ENCODE measurements at regions of chr3 and their contacts with region 1.

Region 1: GRCh38 chr3:195542698-195543499 is at the start of gene PPP1R2:
- DNase-seq: peak; percentile 65 to 96 (median 93)
- ATAC-seq: peak; percentile 86
- H3K4me3 ChIP-seq: peak within 1 kb of the TSS; percentile 90 to 91
- H3K4me3 Mint-ChIP-seq: peak within 1 kb of the TSS; percentile 93
- H3K27ac ChIP-seq: peak within 1 kb of the TSS; percentile 92 to 98
- H3K27ac Mint-ChIP-seq: peak within 1 kb of the TSS; percentile 97
- H3K4me1 ChIP-seq: peaks cover 67% of the 10 kb centered on the region
- H3K4me1 Mint-ChIP-seq: peaks cover 75% of the 10 kb centered on the region
- H3K27me3 ChIP-seq: no peaks in the 10 kb centered on the region
- H3K27me3 Mint-ChIP-seq: no peaks in the 10 kb centered on the region
- CTCF ChIP-seq: no peak
- total RNA-seq, gene PPP1R2: 160 to 166 TPM

Region 2: GRCh38 chr3:194769020-194769643 is 773.8 kb before region 1 on chr3:
- CTCF ChIA-PET with region 1: no interaction called
- POLR2A ChIA-PET with region 1: no interaction called
- intact Hi-C with region 1: loop called (anchors 5 kb)
- DNase-seq: peak; percentile 82 to 98 (median 89)
- ATAC-seq: peak; percentile 96
- H3K4me3 ChIP-seq: peak overlapping the region; percentile 45 to 51
- H3K4me3 Mint-ChIP-seq: peak overlapping the region; percentile 84
- H3K27ac ChIP-seq: peak overlapping the region; percentile 15 to 71
- H3K27ac Mint-ChIP-seq: peak overlapping the region; percentile 92
- H3K4me1 ChIP-seq: peaks cover 11% of the 10 kb centered on the region
- H3K4me1 Mint-ChIP-seq: peaks cover 26% of the 10 kb centered on the region
- H3K27me3 ChIP-seq: peaks cover 0 to 2% of the 10 kb centered on the region in 2 experiments
- H3K27me3 Mint-ChIP-seq: peaks cover 7% of the 10 kb centered on the region
- CTCF ChIP-seq: no peak

Region 3: GRCh38 chr3:195522254-195523023 is 20.5 kb before region 1 on chr3:
- CTCF ChIA-PET with region 1: interaction called, 33 read pairs
- POLR2A ChIA-PET with region 1: interaction called, 4 read pairs
- intact Hi-C with region 1: loop called (anchors 2 kb)
- DNase-seq: peak in 3 of 9 experiments; percentile 52 to 65 (median 56)
- ATAC-seq: peak; percentile 30
- H3K4me3 ChIP-seq: no peak overlapping the region
- H3K4me3 Mint-ChIP-seq: no peak overlapping the region
- H3K27ac ChIP-seq: no peak overlapping the region
- H3K27ac Mint-ChIP-seq: peak overlapping the region; percentile 75
- H3K4me1 ChIP-seq: peaks cover 35% of the 10 kb centered on the region
- H3K4me1 Mint-ChIP-seq: peaks cover 46% of the 10 kb centered on the region
- H3K27me3 ChIP-seq: no peaks in the 10 kb centered on the region
- H3K27me3 Mint-ChIP-seq: no peaks in the 10 kb centered on the region
- CTCF ChIP-seq: peak; percentile 93

Region 4: DNA sequence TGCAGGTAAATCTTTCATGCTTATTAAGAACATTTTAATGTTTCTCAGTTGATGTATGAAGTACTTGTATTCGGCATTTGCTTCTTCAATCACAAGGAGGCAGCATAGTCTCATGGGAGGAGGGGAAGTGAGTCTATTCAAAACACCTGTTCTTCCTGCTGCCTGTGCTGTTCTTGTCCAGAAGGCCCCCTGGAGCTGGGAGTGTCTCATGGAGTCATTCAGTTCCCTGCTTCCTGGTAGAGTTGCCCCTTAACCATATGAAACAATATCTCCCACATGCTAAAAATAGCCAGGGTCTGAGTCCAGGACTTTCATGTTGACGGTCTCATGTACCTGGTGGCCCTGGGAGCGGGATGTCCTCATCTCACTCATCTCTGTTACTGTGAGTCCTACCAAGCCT is 15.7 kb after region 1 on chr3:
- CTCF ChIA-PET with region 1: interaction called, 20 read pairs
- POLR2A ChIA-PET with region 1: interaction called, 5 read pairs
- intact Hi-C with region 1: loop called in 1 of 2 experiments (anchors 2 kb)
- DNase-seq: peak in 5 of 9 experiments; percentile 29 to 77 (median 34)
- ATAC-seq: peak; percentile 89
- H3K4me3 ChIP-seq: no peak overlapping the region
- H3K4me3 Mint-ChIP-seq: no peak overlapping the region
- H3K27ac ChIP-seq: no peak overlapping the region
- H3K27ac Mint-ChIP-seq: peak overlapping the region; percentile 11
- H3K4me1 ChIP-seq: peaks cover 10% of the 10 kb centered on the region
- H3K4me1 Mint-ChIP-seq: peaks cover 28% of the 10 kb centered on the region
- H3K27me3 ChIP-seq: no peaks in the 10 kb centered on the region
- H3K27me3 Mint-ChIP-seq: no peaks in the 10 kb centered on the region
- CTCF ChIP-seq: peak; percentile 61

Region 5: DNA sequence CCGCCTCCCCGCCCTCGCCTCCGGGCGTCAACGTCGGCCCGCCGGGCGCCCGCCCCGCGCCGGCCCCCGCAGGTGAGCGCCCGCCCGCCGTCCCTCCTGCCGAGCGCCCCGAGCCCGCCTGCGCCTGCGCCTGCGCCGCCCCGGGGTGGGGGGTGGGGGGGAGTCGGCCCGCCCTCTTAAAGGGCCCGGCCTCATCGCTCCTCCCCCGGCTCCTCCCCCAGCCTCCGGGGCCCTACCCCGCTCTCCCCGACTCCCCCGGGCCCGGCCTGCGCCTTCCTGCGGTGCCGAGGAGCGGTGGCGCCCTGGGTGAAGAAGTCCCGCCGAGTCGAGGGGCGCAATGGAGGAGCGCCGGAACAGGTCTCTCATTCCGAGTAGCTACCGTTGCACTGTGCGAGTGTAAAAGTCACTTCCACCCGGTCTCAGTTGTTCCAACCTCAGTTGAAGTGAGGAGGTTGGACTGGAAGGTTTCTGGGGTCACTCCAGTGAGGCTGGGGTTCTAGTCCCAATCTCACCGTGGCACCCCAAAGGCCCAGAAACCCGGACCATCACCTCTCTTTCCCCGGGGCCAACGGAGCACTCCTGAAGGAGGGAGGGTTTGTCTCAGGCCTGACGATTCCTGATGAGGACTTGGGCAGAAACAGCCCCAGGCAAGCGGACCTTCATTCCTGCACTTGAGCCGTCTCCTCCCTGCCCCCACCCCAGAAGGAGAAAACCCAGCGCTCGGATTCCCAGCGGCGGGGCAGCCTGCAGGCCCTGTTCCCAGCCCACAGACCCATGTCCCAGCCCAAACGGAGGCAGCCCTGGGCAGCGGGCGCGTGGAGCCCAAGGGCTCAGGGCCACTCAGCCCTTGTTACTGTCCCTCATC is 367.0 kb after region 1 on chr3:
- CTCF ChIA-PET with region 1: no interaction called
- POLR2A ChIA-PET with region 1: interaction called, 3 read pairs
- intact Hi-C with region 1: loop called (anchors 5 kb)
- DNase-seq: peak; percentile 79 to 95 (median 90)
- ATAC-seq: peak; percentile 61
- H3K4me3 ChIP-seq: peak overlapping the region; percentile 32 to 52
- H3K4me3 Mint-ChIP-seq: peak overlapping the region; percentile 77
- H3K27ac ChIP-seq: peak overlapping the region; percentile 35 to 51
- H3K27ac Mint-ChIP-seq: peak overlapping the region; percentile 78
- H3K4me1 ChIP-seq: peaks cover 37% of the 10 kb centered on the region
- H3K4me1 Mint-ChIP-seq: peaks cover 36% of the 10 kb centered on the region
- H3K27me3 ChIP-seq: no peaks in the 10 kb centered on the region
- H3K27me3 Mint-ChIP-seq: no peaks in the 10 kb centered on the region
- CTCF ChIP-seq: no peak